ENCODE measurements at regions of chr6 and their contacts with region 1.

Region 1: GRCh38 chr6:17851001-17851719 is 136.3 kb downstream of the KIF13A start:
- DNase-seq: peak; percentile 55
- ATAC-seq: peak; percentile 62
- H3K4me3 ChIP-seq: no peak overlapping the region
- H3K27ac ChIP-seq: peak overlapping the region; percentile 68; the same call in 1 of the 2 replicates
- H3K4me1 ChIP-seq: peaks cover 14% of the 10 kb centered on the region
- H3K27me3 ChIP-seq: no peaks in the 10 kb centered on the region
- CTCF ChIP-seq: no peak
- POLR2A ChIP-seq: no peak
- RAD21 ChIP-seq: no peak

Region 2: GRCh38 chr6:16277101-16277981 is 1573.8 kb before region 1 on chr6:
- CTCF ChIA-PET with region 1: no interaction called
- POLR2A ChIA-PET with region 1: no interaction called
- dilution Hi-C with region 1: no loop called
- in situ Hi-C with region 1: no loop called
- intact Hi-C with region 1: no loop called
- DNase-seq: peak; percentile 93
- ATAC-seq: peak; percentile 93
- H3K4me3 ChIP-seq: no peak overlapping the region
- H3K27ac ChIP-seq: no peak overlapping the region
- H3K4me1 ChIP-seq: peaks cover 14% of the 10 kb centered on the region
- H3K27me3 ChIP-seq: no peaks in the 10 kb centered on the region
- CTCF ChIP-seq: peak; percentile 80
- POLR2A ChIP-seq: no peak
- RAD21 ChIP-seq: peak; percentile 70

Region 3: GRCh38 chr6:17938901-17939300 is 87.7 kb after region 1 on chr6:
- CTCF ChIA-PET with region 1: no interaction called
- POLR2A ChIA-PET with region 1: no interaction called
- dilution Hi-C with region 1: no loop called
- in situ Hi-C with region 1: no loop called
- intact Hi-C with region 1: no loop called
- DNase-seq: peak; percentile 81
- ATAC-seq: peak; percentile 59
- H3K4me3 ChIP-seq: no peak overlapping the region
- H3K27ac ChIP-seq: no peak overlapping the region
- H3K4me1 ChIP-seq: peaks cover 4% of the 10 kb centered on the region
- H3K27me3 ChIP-seq: no peaks in the 10 kb centered on the region
- CTCF ChIP-seq: no peak
- POLR2A ChIP-seq: no peak
- RAD21 ChIP-seq: no peak

Region 4: DNA sequence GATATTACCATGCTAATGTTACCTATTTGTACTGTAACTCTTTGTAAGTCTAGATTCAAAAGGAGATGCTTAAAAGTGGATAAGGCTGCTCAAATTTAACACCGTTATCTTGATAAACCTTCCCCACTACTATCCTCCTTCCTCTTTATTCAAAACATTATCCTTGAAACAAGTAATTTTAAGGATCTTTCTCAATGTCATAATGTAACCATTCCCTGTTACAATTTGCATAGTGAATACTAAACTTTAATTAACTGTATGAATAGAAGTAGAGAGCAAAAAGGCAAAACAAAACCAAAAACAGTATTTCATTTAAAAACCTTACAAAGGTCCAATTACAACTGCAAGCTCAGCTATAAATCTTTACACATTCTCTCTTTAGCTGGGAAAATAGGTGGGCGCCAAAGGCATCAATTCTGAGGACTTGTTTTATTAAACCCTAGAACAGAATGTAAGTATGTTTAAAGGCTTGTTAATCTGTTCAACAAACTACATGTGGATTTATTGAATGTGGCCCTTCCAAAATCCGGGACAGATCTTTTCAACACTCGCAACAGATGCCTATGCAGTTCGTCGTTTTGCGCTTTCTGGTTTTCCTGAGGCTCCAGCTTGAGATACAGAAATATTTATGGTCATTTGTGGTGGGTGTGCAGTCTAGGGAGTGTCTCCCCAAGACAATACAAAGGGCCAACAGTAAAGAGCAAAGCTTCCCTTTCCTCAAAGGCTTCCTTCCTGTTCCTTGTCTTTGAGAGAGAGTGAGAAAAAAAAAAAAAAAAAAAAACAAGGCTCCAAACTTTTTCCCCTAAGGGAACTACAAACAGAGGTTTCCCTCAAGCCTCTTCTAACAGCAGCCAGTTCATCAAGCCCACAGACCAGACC is 121.2 kb after region 1 on chr6:
- CTCF ChIA-PET with region 1: no interaction called
- POLR2A ChIA-PET with region 1: no interaction called
- dilution Hi-C with region 1: no loop called
- in situ Hi-C with region 1: no loop called
- intact Hi-C with region 1: loop called (anchors 1 kb)
- DNase-seq: no peak
- ATAC-seq: no peak
- H3K4me3 ChIP-seq: no peak overlapping the region
- H3K27ac ChIP-seq: no peak overlapping the region; the same call in 1 of the 2 replicates
- H3K4me1 ChIP-seq: peaks cover 21% of the 10 kb centered on the region
- H3K27me3 ChIP-seq: no peaks in the 10 kb centered on the region
- CTCF ChIP-seq: no peak
- POLR2A ChIP-seq: no peak
- RAD21 ChIP-seq: no peak

Region 5: DNA sequence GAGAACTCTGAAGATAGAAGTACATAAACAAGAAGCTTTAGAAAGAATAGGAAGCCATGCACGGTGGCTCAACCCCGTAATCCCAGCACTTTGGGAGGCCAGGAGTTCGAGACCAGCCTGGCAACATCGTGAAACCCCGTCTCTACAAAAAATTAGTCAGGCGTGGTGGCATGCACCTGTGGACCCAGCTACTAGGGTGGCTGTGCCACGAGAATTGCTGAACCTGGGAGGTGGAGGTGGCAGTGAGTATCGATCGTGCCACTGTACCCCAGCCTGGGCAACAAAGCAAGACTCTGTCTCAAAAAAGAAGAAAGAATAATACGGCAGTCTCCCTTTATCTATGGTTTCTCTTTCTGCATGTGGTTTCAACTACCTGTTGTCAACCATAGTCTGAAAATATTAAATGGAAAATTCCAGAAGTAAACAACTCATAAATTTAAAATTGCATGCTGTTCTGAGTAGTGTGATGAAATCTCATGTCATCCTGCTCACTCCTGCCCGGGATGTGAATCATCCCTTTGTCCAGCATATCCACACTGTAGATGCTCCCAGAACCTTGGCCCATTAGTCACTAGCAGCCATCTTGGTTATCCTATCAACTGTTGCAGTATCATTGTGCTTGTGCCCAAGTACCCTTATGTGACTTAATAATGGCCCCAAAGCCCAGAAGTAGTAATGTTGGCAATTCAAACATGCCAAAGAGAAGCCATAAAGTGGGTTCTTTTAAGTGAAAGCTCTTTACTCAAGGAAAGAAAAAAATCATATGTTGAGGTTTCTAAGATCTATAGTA is 391.1 kb after region 1 on chr6:
- CTCF ChIA-PET with region 1: no interaction called
- POLR2A ChIA-PET with region 1: no interaction called
- dilution Hi-C with region 1: no loop called
- in situ Hi-C with region 1: no loop called
- intact Hi-C with region 1: loop called (anchors 10 kb)
- DNase-seq: peak; percentile 94
- ATAC-seq: peak; percentile 89
- H3K4me3 ChIP-seq: no peak overlapping the region
- H3K27ac ChIP-seq: 0 out of 2 replicates have a peak overlapping the region, but pooled peaks have one; percentile 31
- H3K4me1 ChIP-seq: peaks cover 5% of the 10 kb centered on the region
- H3K27me3 ChIP-seq: no peaks in the 10 kb centered on the region
- CTCF ChIP-seq: no peak
- POLR2A ChIP-seq: no peak
- RAD21 ChIP-seq: no peak